ENCODE measurements at regions of chr15 and their contacts with region 1.

Region 1: GRCh38 chr15:98083203-98083910 is 122.9 kb downstream of the ARRDC4 start:
- DNase-seq: peak; percentile 78 to 83
- H3K4me3 ChIP-seq: no peak overlapping the region
- H3K27ac ChIP-seq: peak overlapping the region; percentile 0 to 49 (median 7)
- H3K4me1 ChIP-seq: peaks cover 3 to 11% of the 10 kb centered on the region in 2 donors
- H3K27me3 ChIP-seq: no peaks in the 10 kb centered on the region
- CTCF ChIP-seq: no peak
- POLR2A ChIP-seq: no peak

Region 2: GRCh38 chr15:97914711-97915110 is 168.6 kb before region 1 on chr15:
- intact Hi-C with region 1: loop called (anchors 5 kb)
- DNase-seq: no peak
- H3K4me3 ChIP-seq: no peak overlapping the region
- H3K27ac ChIP-seq: no peak overlapping the region
- H3K4me1 ChIP-seq: no peaks in the 10 kb centered on the region
- H3K27me3 ChIP-seq: no peaks in the 10 kb centered on the region
- CTCF ChIP-seq: no peak
- POLR2A ChIP-seq: no peak

Region 3: DNA sequence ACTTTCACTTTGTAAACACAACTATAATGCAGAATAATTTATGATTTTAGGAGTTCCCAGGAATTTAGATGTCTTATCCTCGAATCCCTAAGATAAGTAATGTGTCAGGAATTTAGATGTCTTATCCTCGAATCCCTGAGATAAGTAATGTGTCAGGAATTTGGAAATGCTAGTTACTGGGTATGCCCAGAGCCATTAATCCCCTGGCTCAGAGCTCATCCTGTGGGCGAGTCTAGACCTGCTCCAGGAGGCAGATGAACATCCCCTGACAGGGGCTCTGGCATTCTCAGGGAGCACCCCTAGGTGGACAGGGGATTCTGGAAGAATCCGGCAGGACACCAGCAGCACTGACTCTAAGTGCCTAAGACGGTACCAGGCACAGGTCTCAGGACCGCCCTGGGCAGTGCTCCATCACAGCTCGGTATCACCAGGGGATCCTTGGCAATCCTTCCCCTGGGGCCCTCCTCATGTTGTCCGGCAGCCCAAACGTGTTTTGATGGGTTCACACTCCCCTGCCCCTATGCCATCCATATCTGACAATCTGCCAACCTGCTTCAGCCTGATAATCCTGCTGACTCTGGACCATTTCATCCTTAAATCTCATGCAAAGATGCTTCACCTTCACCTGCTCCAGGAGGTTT is 40.6 kb after region 1 on chr15:
- intact Hi-C with region 1: no loop called
- DNase-seq: no peak
- H3K4me3 ChIP-seq: no peak overlapping the region
- H3K27ac ChIP-seq: no peak overlapping the region
- H3K4me1 ChIP-seq: no peaks in the 10 kb centered on the region
- H3K27me3 ChIP-seq: no peaks in the 10 kb centered on the region
- CTCF ChIP-seq: no peak
- POLR2A ChIP-seq: no peak